ENCODE measurements at regions of chr16 and their contacts with region 1.

Region 1: DNA sequence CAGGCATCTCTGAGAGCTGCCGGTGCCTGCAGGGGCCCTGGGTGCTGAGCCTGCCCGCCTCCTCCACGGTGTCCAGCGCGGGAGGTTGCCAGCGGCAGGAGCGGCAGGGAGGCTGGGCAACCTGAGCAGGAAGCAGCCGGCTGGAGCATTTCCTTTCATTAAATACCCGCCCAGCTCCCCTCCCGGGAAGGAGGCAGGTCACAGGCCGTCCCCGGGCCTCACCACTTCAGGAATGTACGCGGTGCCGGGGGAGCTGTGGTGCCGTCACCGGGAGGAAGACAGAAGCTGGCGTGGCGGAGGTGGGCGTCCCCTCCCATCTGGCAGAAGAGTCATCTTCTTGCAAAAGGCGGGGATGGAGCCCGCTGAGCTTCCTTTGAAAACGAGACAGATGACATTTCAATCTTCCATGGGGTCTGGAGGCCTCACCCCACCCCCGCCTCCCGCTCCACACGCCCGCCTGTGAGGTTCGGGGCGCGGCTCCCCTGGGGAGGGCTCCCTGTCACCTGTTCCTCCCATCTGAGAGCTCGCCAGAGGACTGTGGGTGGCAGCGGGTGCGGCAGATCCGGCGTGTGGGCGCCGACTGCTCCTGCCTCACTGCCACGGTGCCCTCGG is 16.0 kb downstream of the SOX8 start:
- DNase-seq: peak; percentile 68
- H3K4me3 ChIP-seq: peak overlapping the region in 1 of 3 experiments; percentile 11
- H3K27ac ChIP-seq: peak overlapping the region; percentile 16
- H3K4me1 ChIP-seq: peaks cover 15% of the 10 kb centered on the region
- H3K27me3 ChIP-seq: no peaks in the 10 kb centered on the region
- CTCF ChIP-seq: no peak
- POLR2A ChIP-seq: no peak

Region 2: DNA sequence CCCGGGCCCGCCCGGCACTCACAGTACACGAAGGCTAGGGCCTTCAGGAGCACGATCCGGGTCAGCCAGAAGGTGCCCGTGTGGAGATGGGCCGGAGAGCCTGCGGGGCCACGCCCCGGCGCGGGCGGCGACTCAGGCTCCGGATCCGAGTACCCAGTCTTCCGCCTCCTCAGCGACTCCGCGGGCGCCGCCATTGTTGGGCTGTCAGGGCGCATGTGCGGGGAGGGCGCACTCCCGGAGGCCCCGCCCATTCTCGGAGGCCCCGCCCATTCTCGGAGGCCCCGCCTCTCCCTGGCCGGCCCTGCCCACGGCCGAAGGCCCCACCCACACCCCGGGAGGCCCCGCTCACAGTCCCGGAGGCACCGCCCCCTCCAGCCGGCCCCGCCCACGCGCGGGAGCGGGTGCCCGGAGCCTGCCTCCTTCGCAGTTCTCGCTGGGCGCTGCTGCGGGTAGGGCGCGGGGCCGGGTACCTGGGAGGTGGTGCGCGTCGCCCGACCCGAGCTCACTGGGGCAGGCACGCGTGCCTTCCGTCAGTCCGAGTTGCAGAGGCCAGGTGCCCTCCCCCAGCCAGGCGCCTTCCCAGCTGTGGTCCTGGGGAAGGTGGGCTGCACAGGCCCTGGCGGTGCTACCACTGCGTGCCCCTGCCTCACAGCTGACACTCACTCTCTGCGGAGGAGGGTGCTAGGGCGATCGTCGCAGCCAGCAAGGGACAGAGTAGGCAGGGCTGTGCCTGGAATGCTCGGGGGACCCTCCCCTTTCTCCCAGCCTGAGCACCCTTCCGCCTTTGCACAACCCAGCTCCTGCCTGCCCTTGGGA is 26.6 kb before region 1 on chr16 and contains the start of gene LMF1:
- CTCF ChIA-PET with region 1: interaction called, 3 read pairs
- POLR2A ChIA-PET with region 1: no interaction called
- dilution Hi-C with region 1: no loop called
- intact Hi-C with region 1: loop called (anchors 1 kb)
- DNase-seq: peak; percentile 93
- H3K4me3 ChIP-seq: peak within 1 kb of the TSS; percentile 64 to 97 (median 68)
- H3K27ac ChIP-seq: peak within 1 kb of the TSS; percentile 59
- H3K4me1 ChIP-seq: peaks cover 7% of the 10 kb centered on the region
- H3K27me3 ChIP-seq: no peaks in the 10 kb centered on the region
- CTCF ChIP-seq: no peak
- POLR2A ChIP-seq: peak; percentile 89
- total RNA-seq, gene LMF1: 12.5 and 17.8 TPM in 2 replicates

Region 3: GRCh38 chr16:981695-982144 is 15.8 kb before region 1 on chr16 and contains the start of gene SOX8:
- CTCF ChIA-PET with region 1: interaction called, 13 read pairs
- POLR2A ChIA-PET with region 1: no interaction called
- dilution Hi-C with region 1: no loop called
- intact Hi-C with region 1: loop called (anchors 2 kb)
- DNase-seq: no peak
- H3K4me3 ChIP-seq: peak within 1 kb of the TSS; percentile 28 to 45 (median 45)
- H3K27ac ChIP-seq: no peak within 1 kb of the TSS
- H3K4me1 ChIP-seq: peaks cover 4% of the 10 kb centered on the region
- H3K27me3 ChIP-seq: peaks cover 8 to 20% of the 10 kb centered on the region in 2 experiments
- CTCF ChIP-seq: no peak
- POLR2A ChIP-seq: no peak
- total RNA-seq, gene SOX8: 0.42 and 0.53 TPM in 2 replicates

Measured in endothelial cell of umbilical vein (primary cell).